IMR-90 (cell line): ENCODE measurements at regions of chr6 and their contacts with region 1.

Region 1: DNA sequence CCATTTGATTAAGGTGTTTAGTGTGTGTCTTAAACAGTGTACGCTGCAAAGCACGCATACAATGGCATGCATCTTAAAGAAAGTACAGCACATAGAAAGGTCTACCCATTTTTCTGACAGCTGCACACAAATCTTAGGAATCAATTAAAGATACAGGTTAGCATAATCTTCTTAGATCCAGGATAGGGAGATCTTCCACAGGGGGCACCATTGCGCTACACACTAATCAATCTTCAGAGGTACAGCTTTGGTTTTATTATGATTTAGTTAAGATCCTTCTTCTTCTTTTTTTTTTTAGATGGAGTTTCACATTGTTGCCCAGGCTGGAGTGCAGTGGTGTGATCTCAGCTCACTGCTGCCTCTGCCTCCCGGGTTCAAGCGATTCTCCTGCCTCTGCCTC is 63.7 kb upstream of the BEND3 start:
- DNase-seq: peak; percentile 8
- ATAC-seq: no peak
- H3K4me3 ChIP-seq: no peak overlapping the region
- H3K27ac ChIP-seq: no peak overlapping the region
- H3K4me1 ChIP-seq: no peaks in the 10 kb centered on the region
- H3K27me3 ChIP-seq: no peaks in the 10 kb centered on the region
- CTCF ChIP-seq: 0 out of 2 replicates have a peak, but pooled peaks have one; percentile 27
- POLR2A ChIP-seq: no peak
- RAD21 ChIP-seq: peak; percentile 34; the same call in 1 of the 2 replicates

Region 2: DNA sequence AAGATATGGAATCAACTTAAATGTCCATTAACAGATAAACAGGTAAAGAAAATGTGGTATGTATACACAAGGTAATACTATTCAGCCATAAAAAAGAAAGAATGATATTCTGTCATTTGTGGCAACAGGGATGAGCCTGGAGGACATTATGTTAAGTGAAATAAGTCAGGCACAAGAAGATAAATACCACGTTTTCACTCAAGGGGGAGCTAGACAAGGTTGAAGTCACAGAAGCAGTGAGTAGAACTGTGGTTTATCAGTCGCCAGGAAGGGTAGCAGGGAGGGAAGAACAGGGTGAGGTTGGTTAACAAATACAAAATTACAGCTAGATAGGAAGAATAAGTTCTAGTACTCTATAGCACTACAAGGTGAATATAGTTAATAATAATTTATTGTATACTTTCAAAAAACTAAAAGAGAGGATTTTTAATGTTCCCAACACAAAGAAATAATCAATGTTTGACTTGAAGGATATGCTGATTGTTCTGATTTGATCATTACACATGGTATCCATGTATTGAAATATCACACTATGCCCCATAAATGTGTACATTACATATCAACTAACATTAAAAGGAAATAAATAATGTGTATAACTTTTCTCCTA is 570.8 kb before region 1 on chr6:
- CTCF ChIA-PET with region 1: no interaction called
- POLR2A ChIA-PET with region 1: no interaction called
- dilution Hi-C with region 1: no loop called
- in situ Hi-C with region 1: no loop called
- intact Hi-C with region 1: no loop called
- DNase-seq: peak; percentile 49
- ATAC-seq: peak; percentile 59
- H3K4me3 ChIP-seq: no peak overlapping the region
- H3K27ac ChIP-seq: no peak overlapping the region
- H3K4me1 ChIP-seq: no peaks in the 10 kb centered on the region
- H3K27me3 ChIP-seq: no peaks in the 10 kb centered on the region
- CTCF ChIP-seq: peak; percentile 48
- POLR2A ChIP-seq: no peak
- RAD21 ChIP-seq: peak; percentile 20

Region 3: DNA sequence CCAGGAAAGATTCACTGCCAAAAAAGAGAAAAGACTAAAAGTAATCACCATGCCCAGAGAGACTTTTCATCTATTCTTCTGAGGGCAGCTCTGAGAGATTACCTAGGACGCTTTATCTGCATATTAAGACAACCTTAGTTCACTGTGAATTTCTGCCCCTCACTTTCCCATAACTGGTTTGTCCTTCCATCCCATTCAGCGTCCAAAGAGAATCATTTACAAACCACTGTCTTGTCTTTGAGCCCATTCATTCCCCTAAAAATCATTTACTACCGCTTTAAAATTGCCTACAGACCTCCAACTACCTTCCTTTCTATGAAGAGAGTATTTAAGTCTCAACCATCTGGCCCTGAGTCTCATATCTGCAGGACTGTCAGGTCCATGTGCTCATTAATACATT is 131.4 kb after region 1 on chr6:
- CTCF ChIA-PET with region 1: interaction called, 3 read pairs
- POLR2A ChIA-PET with region 1: interaction called, 12 read pairs
- dilution Hi-C with region 1: no loop called
- in situ Hi-C with region 1: no loop called
- intact Hi-C with region 1: no loop called
- DNase-seq: no peak
- ATAC-seq: no peak
- H3K4me3 ChIP-seq: no peak overlapping the region
- H3K27ac ChIP-seq: no peak overlapping the region
- H3K4me1 ChIP-seq: no peaks in the 10 kb centered on the region
- H3K27me3 ChIP-seq: no peaks in the 10 kb centered on the region
- CTCF ChIP-seq: no peak
- POLR2A ChIP-seq: no peak
- RAD21 ChIP-seq: no peak

Region 4: DNA sequence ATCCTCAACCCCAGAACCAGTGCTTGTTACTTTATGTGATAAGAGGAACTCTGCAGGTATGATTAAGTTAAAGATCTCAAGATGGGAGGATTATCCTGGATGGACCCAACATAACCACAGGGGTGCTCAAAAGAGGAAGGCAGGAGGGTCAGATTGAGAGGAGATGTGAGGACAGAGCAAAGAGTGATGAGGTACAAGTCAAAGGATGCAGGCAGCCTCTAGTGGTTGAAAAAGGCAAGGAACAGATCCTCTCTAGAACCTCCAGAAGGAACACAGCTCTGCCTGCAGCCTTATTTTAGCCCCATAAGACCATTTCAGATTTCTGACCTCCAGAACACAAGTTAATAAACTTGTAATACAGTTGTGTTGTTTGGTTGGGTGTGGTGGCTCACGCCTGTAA is 239.1 kb after region 1 on chr6:
- CTCF ChIA-PET with region 1: no interaction called
- POLR2A ChIA-PET with region 1: no interaction called
- dilution Hi-C with region 1: no loop called
- in situ Hi-C with region 1: no loop called
- intact Hi-C with region 1: no loop called
- DNase-seq: peak; percentile 10
- ATAC-seq: peak; percentile 49; the same call in 1 of the 2 replicates
- H3K4me3 ChIP-seq: no peak overlapping the region
- H3K27ac ChIP-seq: no peak overlapping the region
- H3K4me1 ChIP-seq: peaks cover 2% of the 10 kb centered on the region
- H3K27me3 ChIP-seq: no peaks in the 10 kb centered on the region
- CTCF ChIP-seq: peak; percentile 20; the same call in 1 of the 2 replicates
- POLR2A ChIP-seq: no peak
- RAD21 ChIP-seq: peak; percentile 27; the same call in 1 of the 2 replicates